ENCODE measurements at regions of chr7 and their contacts with region 1.

Region 1: GRCh38 chr7:128455551-128456254 is at the start of gene HILPDA:
- DNase-seq: peak; percentile 91 to 95 (median 92)
- H3K4me3 ChIP-seq: peak within 1 kb of the TSS; percentile 90
- H3K4me3 Mint-ChIP-seq: peak within 1 kb of the TSS; percentile 90 to 95 (median 92)
- H3K27ac ChIP-seq: peak within 1 kb of the TSS; percentile 93
- H3K27ac Mint-ChIP-seq: peak within 1 kb of the TSS; percentile 73 to 98 (median 96)
- H3K4me1 ChIP-seq: peaks cover 21% of the 10 kb centered on the region
- H3K4me1 Mint-ChIP-seq: peaks cover 20 to 31% (median 31%) of the 10 kb centered on the region in 3 donors
- H3K27me3 ChIP-seq: no peaks in the 10 kb centered on the region
- H3K27me3 Mint-ChIP-seq: peaks cover 5 to 9% of the 10 kb centered on the region in 2 donors
- total RNA-seq, gene HILPDA: 16.7 to 17.5 TPM

Region 2: GRCh38 chr7:128266883-128267607 is 188.7 kb before region 1 on chr7:
- CTCF ChIA-PET with region 1: no interaction called
- POLR2A ChIA-PET with region 1: no interaction called
- DNase-seq: no peak
- H3K4me3 ChIP-seq: no peak overlapping the region
- H3K4me3 Mint-ChIP-seq: no peak overlapping the region
- H3K27ac ChIP-seq: no peak overlapping the region
- H3K27ac Mint-ChIP-seq: no peak overlapping the region
- H3K4me1 ChIP-seq: no peaks in the 10 kb centered on the region
- H3K4me1 Mint-ChIP-seq: peaks cover 0 to 6% (median 2%) of the 10 kb centered on the region in 3 donors
- H3K27me3 ChIP-seq: peaks cover 7% of the 10 kb centered on the region
- H3K27me3 Mint-ChIP-seq: peaks cover 26 to 46% of the 10 kb centered on the region in 2 donors

Region 3: GRCh38 chr7:128415217-128415785 is 40.4 kb before region 1 on chr7:
- CTCF ChIA-PET with region 1: interaction called, 15 read pairs
- POLR2A ChIA-PET with region 1: no interaction called
- DNase-seq: no peak
- H3K4me3 ChIP-seq: no peak overlapping the region
- H3K4me3 Mint-ChIP-seq: no peak overlapping the region
- H3K27ac ChIP-seq: no peak overlapping the region
- H3K27ac Mint-ChIP-seq: no peak overlapping the region
- H3K4me1 ChIP-seq: peaks cover 3% of the 10 kb centered on the region
- H3K4me1 Mint-ChIP-seq: peaks cover 2 to 3% (median 3%) of the 10 kb centered on the region in 3 donors
- H3K27me3 ChIP-seq: no peaks in the 10 kb centered on the region
- H3K27me3 Mint-ChIP-seq: peaks cover 2 to 3% of the 10 kb centered on the region in 2 donors

Region 4: DNA sequence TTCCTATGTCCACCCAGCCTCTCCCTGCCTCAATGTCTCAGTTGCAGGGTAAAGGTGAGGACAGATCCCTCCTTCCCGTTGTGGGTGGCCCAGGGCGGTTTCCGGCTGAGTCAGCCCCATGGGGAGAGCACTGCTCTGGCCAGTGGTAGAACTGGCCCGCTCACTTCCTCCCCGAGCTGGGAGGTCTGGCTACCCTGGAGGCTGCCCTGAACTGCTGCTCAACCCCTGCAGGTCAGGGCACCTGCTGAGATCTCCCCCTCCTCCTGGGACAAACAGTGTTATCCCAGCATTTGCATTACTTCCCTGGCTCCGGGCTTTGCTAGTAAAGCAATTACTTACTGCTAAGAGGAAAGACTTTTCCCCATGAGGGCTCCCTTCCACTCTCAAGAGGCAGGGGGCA is 24.5 kb before region 1 on chr7:
- CTCF ChIA-PET with region 1: interaction called, 139 read pairs
- POLR2A ChIA-PET with region 1: interaction called, 6 read pairs
- DNase-seq: no peak
- H3K4me3 ChIP-seq: no peak overlapping the region
- H3K4me3 Mint-ChIP-seq: no peak overlapping the region
- H3K27ac ChIP-seq: no peak overlapping the region
- H3K27ac Mint-ChIP-seq: no peak overlapping the region
- H3K4me1 ChIP-seq: no peaks in the 10 kb centered on the region
- H3K4me1 Mint-ChIP-seq: no peaks in the 10 kb centered on the region
- H3K27me3 ChIP-seq: no peaks in the 10 kb centered on the region
- H3K27me3 Mint-ChIP-seq: peaks cover 9 to 29% of the 10 kb centered on the region in 2 donors

Region 5: DNA sequence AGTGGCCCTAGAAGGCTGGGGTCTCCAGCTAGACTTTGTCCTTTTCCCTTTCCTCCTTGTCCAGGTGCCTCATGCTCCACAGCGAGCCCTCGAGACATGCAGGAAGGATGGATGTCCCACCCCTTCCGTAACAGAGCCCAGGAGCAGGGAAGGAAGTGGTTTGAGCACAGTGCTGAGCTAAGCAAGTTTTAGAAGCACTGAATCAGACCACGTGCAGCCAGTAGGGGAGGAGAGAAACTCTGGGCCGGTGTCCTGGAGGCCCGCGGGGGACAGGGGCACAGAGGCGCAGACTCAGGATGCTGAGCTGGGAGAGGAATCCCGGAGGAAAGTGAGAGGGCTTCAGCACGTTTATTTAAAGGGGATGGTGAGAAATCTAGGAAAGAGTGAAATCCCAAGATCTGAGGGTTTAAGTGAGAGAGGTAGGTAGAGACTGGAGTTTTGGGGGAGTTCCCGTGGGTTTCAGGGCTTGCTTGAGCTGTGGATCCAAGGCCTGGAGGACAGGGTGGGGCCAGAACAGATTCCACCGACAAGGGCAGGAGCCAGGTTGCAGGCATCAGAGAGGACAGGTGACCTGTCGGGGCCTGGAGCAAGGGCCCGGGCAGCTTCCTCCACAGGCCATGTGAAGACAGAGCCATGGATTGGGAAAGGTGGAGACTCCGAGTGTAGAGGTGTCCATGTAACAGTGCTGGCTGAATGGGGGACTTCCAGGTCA is 477.6 kb after region 1 on chr7:
- CTCF ChIA-PET with region 1: no interaction called
- POLR2A ChIA-PET with region 1: no interaction called
- DNase-seq: peak in 1 of 5 donors; percentile 19
- H3K4me3 ChIP-seq: peak overlapping the region; percentile 22
- H3K4me3 Mint-ChIP-seq: peak overlapping the region; percentile 2 to 86 (median 74)
- H3K27ac ChIP-seq: no peak overlapping the region
- H3K27ac Mint-ChIP-seq: peak overlapping the region in 6 of 8 donors; percentile 29 to 75 (median 60)
- H3K4me1 ChIP-seq: peaks cover 12% of the 10 kb centered on the region
- H3K4me1 Mint-ChIP-seq: peaks cover 17 to 24% (median 20%) of the 10 kb centered on the region in 3 donors
- H3K27me3 ChIP-seq: peaks cover 5% of the 10 kb centered on the region
- H3K27me3 Mint-ChIP-seq: peaks cover 6 to 18% of the 10 kb centered on the region in 2 donors

Measured in CD8-positive, alpha-beta memory T cell (primary cell).